ENCODE measurements at regions of chr17 and their contacts with region 1.

Region 1: GRCh38 chr17:44006598-44007345 is 2.4 kb downstream of the NAGS start:
- H3K4me3 Mint-ChIP-seq: peak overlapping the region; percentile 84
- H3K27ac Mint-ChIP-seq: peak overlapping the region; percentile 84
- H3K4me1 Mint-ChIP-seq: peaks cover 70% of the 10 kb centered on the region
- H3K27me3 Mint-ChIP-seq: peaks cover 42% of the 10 kb centered on the region

Region 2: DNA sequence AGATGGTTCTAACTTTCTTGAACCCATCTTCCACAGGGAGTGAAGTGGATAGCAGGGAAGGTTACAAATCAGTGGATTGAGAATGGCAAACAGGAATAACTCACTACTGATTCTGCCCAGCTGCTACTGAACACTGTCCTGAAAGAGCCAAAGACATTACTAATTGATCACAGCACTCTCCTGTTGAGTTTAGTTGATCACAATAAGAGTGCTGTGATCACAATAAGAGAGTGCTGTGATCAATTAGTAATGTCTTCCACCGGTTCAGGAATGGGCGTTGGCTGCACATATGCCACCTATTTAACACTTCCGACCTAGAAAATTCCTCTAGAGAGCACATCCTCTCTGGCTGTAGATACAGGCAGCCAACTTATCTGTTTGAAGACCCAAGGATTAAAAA is 215.2 kb before region 1 on chr17:
- intact Hi-C with region 1: no loop called
- H3K4me3 Mint-ChIP-seq: no peak overlapping the region
- H3K27ac Mint-ChIP-seq: no peak overlapping the region
- H3K4me1 Mint-ChIP-seq: peaks cover 24% of the 10 kb centered on the region
- H3K27me3 Mint-ChIP-seq: peaks cover 20% of the 10 kb centered on the region

Region 3: DNA sequence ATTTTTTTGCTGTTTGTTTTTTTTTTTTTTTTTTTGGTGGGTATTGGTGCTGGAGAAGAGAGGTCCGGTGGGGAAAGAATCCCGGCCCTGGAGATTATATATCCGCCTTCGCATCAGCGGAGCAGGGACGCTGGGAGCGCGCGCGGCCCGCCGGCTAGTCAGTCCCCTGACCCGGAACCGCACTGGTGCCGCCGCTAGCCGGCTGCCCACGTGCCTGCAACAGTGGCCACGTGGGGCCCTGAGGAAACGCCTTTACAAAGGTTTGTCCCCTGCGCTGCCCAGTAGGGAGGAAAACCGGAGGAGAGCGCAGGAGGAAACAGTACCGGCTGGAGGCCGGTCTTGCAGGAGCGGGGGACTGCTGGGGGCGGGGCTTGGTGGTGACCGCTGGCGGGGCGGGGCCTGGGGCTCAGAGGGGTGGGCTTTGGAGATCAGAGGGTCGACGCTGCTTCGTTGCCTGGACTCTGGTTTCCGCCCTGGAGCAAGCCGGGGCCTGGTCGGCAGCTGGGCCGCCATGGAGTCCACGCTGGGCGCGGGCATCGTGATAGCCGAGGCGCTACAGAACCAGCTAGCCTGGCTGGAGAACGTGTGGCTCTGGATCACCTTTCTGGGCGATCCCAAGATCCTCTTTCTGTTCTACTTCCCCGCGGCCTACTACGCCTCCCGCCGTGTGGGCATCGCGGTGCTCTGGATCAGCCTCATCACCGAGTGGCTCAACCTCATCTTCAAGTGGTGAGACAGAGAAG is 63.9 kb after region 1 on chr17 and contains the start of gene G6PC3:
- intact Hi-C with region 1: loop called (anchors 2 kb)
- H3K4me3 Mint-ChIP-seq: peak within 1 kb of the TSS; percentile 84
- H3K27ac Mint-ChIP-seq: peak within 1 kb of the TSS; percentile 99
- H3K4me1 Mint-ChIP-seq: peaks cover 64% of the 10 kb centered on the region
- H3K27me3 Mint-ChIP-seq: no peaks in the 10 kb centered on the region